ENCODE measurements at regions of chr7 and their contacts with region 1.

Region 1: DNA sequence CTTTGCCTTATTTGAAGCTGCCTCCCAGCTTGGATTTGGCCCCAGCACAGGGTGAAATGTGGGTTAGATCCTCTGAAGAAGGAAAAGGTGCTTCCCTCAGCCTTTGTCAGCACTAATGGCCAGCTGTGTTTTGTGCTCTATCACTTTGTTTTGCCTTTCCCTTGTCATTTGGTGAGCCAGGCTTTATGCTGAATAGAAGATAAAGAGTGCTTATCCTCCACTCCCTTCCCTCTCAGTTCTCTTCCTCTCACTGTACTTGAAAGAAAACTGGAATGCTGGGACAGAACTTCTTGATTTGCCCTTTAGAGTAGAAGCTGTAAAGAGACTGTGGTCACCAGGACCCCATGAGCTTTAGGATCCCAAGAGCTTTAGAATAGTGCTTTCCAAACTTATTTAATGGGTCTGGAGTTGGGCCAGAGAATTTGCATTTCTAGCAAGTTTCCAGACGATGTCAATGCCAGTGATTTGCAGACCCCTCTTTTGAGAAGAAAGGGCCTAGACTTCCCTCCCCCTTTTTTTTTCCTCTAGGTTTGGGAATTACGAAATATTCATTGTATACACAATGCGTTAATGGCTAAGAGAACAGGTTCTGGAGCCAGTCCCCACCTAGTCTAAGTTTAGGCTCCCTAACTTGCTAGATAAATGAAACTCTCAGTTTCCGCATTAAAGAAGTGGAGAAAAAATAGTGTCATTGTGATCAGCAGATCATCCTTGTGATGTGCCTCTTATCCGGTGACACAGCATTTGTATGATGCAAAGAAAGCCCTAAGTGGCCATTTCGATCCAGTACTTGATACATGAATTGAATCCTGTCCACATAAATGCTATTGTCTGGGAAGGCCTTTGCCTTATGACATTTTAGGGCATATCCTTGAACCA is 81.3 kb downstream of the LRRC4 start:
- DNase-seq: no peak
- H3K4me3 ChIP-seq: no peak overlapping the region
- H3K27ac ChIP-seq: peak overlapping the region in 31 of 59 donors; percentile 2 to 73 (median 40)
- H3K27me3 ChIP-seq: no peaks in the 10 kb centered on the region
- CTCF ChIP-seq: no peak

Region 2: DNA sequence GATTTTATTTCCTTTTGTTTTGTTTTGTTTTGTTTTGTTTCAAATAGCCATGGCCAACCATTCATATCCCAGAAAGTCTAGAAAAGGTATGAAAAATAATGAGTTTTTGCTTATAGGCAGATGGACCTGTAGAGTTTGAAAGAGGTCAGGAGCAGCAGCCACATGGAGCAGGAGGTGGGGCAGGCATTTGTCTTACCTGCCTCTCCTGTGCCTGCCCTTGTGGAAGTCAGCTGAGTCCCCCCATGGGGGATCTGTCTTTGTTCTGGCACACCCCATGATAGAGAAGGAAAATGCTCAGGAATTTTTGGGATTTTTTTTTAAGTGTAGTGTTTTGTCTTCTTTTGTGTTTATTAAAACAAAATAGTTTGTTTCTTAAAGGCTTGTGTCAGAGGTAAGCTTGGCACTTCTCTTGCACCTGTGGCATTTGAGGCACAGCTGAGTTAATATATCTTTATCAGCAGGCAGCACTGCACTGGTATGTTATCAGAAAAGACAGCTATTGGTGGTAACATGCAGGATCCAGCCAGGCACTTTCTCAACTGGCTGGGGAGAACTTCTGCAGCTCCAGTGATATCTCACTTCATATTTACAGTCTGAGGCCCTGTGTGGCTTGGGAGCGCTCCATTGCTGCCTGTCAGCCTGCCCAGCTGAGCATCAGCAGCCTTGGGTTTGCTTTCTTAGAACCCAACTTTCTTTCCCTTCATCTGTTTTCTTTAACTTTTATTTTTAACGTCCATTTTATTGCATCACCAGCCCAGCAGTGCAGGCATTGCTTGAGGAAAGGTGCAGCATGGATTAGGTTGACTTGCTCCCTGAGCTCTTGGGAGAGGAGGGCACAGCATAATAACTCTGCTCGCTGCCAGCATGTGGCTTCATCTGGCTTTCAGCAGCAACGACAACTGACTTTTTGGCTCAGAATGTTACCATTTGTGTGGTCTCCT is 36.9 kb after region 1 on chr7:
- intact Hi-C with region 1: loop called in 1 of 2 experiments (anchors 5 kb)
- DNase-seq: no peak
- H3K4me3 ChIP-seq: no peak overlapping the region
- H3K27ac ChIP-seq: peak overlapping the region in 28 of 59 donors; percentile 1 to 76 (median 24)
- H3K27me3 ChIP-seq: no peaks in the 10 kb centered on the region
- CTCF ChIP-seq: no peak